Activated CD8-positive, alpha-beta memory T cell treated with anti-CD3 and anti-CD28 coated beads, Interleukin-2, amount 10 ng/mL, durations not matched to agents 7 days and 5 days (primary cell): ENCODE measurements at regions of chr18 and their contacts with region 1.

Region 1: GRCh38 chr18:48913201-48913600 is 37.6 kb downstream of the SMAD7 start:
- DNase-seq: peak; percentile 68
- ATAC-seq: peak; percentile 62
- H3K4me3 Mint-ChIP-seq: no peak overlapping the region
- H3K27ac Mint-ChIP-seq: no peak overlapping the region
- H3K4me1 Mint-ChIP-seq: peaks cover 34% of the 10 kb centered on the region
- H3K27me3 Mint-ChIP-seq: no peaks in the 10 kb centered on the region

Region 2: DNA sequence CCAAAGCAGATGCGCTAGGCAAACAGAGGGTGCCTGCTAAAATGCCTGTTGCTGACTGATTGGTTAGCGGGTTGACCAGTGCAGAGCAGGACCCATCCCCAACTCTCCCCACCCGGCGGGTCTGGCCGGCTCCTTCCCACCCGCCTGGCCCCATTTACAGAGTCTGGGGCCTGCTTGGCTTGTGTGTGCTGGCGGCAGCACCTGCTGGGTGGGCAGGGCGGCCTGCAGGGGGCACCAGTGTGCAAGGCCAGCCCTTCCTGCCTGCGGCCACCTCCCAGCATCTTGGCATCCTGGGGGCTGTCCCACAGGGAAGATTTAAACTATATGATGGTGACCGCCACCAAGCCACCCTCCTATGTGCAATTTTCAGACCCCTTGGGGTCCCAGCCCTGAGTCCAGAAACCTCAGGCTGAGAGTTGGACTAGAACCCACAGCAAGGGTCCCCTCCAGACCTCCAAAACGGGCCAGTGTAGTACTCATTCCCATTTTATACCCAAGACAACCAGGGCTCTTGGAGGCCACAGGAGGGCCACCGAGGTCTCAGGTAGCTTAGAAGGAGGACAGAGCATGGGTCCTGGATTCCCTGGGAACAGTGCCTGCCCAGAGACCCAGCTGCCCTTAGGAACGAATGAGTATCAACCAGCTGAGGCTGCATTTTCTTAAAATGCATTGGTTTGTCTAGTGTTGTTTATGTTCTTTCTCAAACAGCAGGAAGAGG is 136.0 kb before region 1 on chr18:
- CTCF ChIA-PET with region 1: interaction called, 12 read pairs
- DNase-seq: peak; percentile 78
- ATAC-seq: peak; percentile 90
- H3K4me3 Mint-ChIP-seq: no peak overlapping the region
- H3K27ac Mint-ChIP-seq: peak overlapping the region; percentile 26
- H3K4me1 Mint-ChIP-seq: peaks cover 7% of the 10 kb centered on the region
- H3K27me3 Mint-ChIP-seq: no peaks in the 10 kb centered on the region

Region 3: DNA sequence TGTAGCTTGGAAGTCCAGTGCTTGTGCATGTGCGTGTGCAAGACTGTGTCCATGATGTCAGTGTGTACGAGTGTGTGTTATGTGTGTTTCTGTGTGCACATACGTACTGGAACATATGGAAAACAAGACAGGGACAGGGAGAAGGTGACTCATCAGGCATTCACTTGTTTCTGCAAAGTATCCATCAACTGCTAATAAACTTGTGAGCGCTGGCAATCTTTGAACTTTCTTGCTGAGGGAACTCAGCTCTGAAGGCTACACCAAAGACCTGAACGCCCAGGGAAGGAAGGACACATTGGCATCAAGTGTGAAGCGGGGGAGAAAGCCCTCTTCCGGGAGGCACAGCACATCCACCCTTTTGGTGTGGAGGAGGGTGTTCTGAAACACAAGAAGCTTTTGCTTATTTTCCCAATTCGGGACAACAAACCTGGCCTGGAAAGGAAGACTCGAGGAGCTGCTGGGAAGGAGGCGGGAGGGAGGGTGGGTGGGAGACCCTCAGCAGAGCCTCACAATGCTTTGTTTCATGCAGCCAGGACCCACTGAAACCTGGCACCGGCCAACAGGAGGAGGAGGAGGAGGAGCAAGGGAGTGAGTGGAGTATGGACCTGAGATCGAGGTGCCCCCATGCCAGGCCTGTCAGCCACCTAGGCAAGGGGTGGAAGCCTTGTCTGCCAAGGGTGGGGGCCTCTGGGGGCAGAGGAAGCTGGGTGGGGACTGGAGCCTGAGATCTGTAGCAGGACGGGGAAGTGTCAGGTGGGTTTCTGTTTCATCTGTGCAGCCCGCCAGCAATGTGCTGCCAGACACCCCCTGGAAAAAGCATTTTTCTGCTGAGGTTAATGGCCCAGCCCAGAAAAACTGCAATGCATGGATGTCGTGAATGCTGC is 10.8 kb after region 1 on chr18:
- CTCF ChIA-PET with region 1: interaction called, 14 read pairs
- DNase-seq: peak; percentile 60
- ATAC-seq: peak; percentile 26
- H3K4me3 Mint-ChIP-seq: peak overlapping the region; percentile 60
- H3K27ac Mint-ChIP-seq: peak overlapping the region; percentile 89
- H3K4me1 Mint-ChIP-seq: peaks cover 68% of the 10 kb centered on the region
- H3K27me3 Mint-ChIP-seq: no peaks in the 10 kb centered on the region